SK-N-SH (cell line): ENCODE measurements at regions of chr6 and their contacts with region 1.

Region 1: GRCh38 chr6:30130887-30131862 is 4.8 kb upstream of the TRIM40 start:
- DNase-seq: peak; percentile 83
- H3K4me3 ChIP-seq: peak overlapping the region in 1 of 2 experiments; percentile 18; a peak in 1 of 4 replicates
- H3K27ac ChIP-seq: no peak overlapping the region
- H3K4me1 ChIP-seq: no peaks in the 10 kb centered on the region
- H3K27me3 ChIP-seq: peaks cover 84% of the 10 kb centered on the region
- CTCF ChIP-seq: peak; percentile 99
- EP300 ChIP-seq: no peak
- RAD21 ChIP-seq: peak; percentile 77

Region 2: DNA sequence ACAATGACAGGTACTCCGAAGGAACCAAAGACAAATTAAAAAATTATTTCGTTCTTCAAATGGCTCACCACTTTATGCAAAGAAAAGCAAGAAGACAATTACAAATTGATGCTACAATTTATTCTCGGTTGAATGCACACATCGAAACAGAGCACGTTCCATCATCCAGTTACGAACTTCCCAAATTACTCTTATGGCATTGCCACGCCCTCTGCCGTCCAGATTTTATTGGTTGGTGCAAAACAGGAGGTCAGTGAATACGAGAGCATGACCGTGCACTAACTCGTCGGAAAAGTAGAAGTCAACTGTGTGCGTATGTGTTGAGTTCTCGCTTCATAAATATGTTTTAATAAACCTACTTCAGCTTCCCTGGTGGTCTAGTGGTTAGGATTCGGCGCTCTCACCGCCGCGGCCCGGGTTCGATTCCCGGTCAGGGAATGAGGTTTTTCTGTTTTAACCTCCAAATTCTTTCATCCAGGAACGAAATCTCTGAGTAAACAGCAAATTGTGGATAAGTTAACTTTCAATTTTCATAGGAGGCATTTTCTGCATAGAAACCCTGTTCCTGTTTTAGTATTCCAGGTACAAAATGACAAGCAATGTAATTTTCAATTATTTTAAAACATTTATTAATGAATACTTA is 1149.2 kb before region 1 on chr6:
- CTCF ChIA-PET with region 1: no interaction called
- POLR2A ChIA-PET with region 1: no interaction called
- DNase-seq: peak; percentile 55
- H3K4me3 ChIP-seq: peak overlapping the region; percentile 91 to 100
- H3K27ac ChIP-seq: peak overlapping the region; percentile 66 to 68
- H3K4me1 ChIP-seq: peaks cover 0 to 9% of the 10 kb centered on the region in 2 experiments; a peak in 1 of 4 replicates
- H3K27me3 ChIP-seq: no peaks in the 10 kb centered on the region
- CTCF ChIP-seq: no peak
- EP300 ChIP-seq: 0 out of 4 replicates have a peak, but pooled peaks of 1 of the 2 experiments have one; percentile 31
- RAD21 ChIP-seq: no peak

Region 3: DNA sequence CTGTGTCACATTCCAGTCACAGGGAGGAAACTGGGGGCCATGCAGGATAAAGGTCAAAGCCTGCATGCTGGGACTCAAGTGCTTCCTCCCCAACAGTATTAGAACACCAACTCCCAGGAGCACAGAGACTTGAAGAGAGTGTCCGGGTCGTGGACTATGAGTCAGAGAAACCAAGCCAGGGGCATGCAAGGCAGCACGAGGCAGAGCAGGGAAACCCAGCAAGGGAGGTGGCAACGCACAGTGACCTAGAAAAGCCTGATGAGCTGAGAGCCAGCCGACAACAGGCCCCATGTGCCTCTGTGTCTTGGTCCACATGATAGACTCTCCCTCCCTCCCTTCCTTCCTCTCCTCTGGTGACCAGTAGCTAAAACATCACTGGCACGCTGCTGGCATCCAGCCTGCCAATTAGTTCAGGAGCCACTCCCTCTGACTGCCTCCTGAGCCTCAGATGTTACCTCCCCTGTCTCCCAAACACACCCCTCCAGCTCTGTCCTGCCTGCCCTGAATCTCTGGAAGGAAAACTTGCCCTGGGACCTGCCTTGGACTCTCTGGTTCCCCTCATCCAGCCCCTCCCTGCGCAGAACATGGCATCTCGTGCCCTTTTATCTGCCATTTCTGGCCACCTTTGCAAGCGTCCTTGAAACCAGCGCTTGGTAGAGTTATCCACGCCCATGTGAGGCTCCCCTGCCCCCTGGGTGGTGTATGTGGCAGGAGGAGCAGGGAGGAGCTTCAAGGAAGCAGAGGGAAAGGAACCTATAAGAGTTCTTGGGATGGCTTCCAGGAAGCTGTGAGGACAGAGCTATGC is 39.4 kb before region 1 on chr6:
- CTCF ChIA-PET with region 1: interaction called, 22 read pairs
- POLR2A ChIA-PET with region 1: no interaction called
- DNase-seq: no peak
- H3K4me3 ChIP-seq: no peak overlapping the region
- H3K27ac ChIP-seq: no peak overlapping the region
- H3K4me1 ChIP-seq: no peaks in the 10 kb centered on the region
- H3K27me3 ChIP-seq: peaks cover 56% of the 10 kb centered on the region
- CTCF ChIP-seq: no peak
- EP300 ChIP-seq: no peak
- RAD21 ChIP-seq: no peak

Region 4: DNA sequence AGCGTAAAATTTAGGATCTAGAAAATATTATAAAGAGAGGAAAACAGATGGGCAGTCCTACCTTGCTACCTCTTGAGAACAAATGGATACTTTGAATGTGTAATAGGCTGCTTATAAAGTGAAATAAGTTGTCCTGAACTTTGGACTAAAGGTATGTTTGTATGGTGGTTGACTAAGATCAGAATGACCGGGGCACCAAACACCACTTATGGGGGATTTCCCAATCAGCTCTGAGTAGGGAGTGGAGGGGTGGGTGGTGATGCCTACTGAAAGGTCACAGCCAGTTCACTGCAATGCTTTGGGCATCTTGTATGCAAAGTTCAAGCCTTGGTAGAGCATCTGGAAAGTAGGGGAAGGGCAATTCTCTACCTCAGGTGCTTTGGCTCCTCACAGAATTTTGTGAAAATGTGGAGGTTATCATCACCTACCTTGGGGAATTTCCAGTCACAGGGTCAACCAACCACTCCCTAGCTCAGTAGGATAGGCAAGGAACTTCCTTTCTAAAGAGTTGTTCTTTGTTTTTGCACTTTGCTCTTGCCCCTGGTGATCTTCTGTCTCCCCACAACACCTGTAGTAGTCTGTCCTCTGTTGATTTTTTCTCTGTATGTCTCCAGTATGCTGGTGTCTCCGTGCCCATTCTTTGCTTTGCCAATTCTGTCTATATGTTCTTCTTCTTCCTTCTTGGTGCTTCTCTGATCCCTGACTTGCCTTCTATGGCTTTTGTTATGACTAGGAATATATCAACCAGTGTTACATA is 18.0 kb before region 1 on chr6 and contains the start of gene TRIM31:
- CTCF ChIA-PET with region 1: interaction called, 207 read pairs
- POLR2A ChIA-PET with region 1: no interaction called
- DNase-seq: no peak
- H3K4me3 ChIP-seq: no peak within 1 kb of the TSS
- H3K27ac ChIP-seq: no peak within 1 kb of the TSS
- H3K4me1 ChIP-seq: no peaks in the 10 kb centered on the region
- H3K27me3 ChIP-seq: peaks cover 59% of the 10 kb centered on the region
- CTCF ChIP-seq: no peak
- EP300 ChIP-seq: no peak
- RAD21 ChIP-seq: no peak
- polyA plus RNA-seq, gene TRIM31: not detected in 2 replicates

Region 5: DNA sequence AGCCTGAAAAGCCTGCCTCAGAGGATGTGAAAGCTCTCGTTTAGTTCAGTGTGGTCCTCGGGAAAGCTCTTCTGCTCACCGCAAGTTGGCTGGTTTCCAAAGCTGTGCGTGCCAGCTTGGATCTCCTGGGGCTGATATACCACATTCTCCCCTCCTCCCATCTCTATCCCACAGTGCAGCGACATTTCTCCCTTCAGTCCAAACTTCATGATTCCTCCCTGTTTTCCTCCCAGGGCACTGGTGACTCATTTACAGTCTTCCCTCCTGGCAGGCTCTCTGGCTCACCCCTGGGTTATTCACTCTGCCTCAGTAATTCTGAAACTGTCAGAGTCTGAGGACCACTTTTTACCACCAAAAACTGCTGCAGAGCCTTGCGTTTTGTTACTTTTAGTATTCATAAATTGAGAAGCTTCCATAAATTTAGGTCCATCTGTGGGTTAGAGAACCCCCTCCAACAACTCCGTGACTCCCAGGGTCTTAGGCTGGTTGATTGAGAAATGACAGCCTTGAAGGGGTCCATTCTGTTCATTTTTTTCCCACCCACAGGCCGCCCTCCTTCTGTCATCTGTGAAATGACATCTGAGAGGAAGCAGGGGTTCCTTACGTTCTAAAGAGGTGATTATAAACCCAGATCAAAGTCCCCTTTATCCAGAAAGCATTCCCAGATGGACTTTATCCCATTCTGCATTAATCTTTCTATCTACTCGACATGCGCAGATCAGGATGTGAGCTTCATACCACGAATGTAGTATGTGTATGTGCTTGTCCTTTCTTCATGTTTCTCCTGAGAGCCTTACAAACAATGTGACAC is 23.7 kb after region 1 on chr6:
- CTCF ChIA-PET with region 1: interaction called, 38 read pairs
- POLR2A ChIA-PET with region 1: no interaction called
- DNase-seq: no peak
- H3K4me3 ChIP-seq: no peak overlapping the region
- H3K27ac ChIP-seq: no peak overlapping the region
- H3K4me1 ChIP-seq: no peaks in the 10 kb centered on the region; a peak in 1 of 4 replicates
- H3K27me3 ChIP-seq: peaks cover 28% of the 10 kb centered on the region; the same call in 1 of the 2 replicates
- CTCF ChIP-seq: no peak
- EP300 ChIP-seq: no peak
- RAD21 ChIP-seq: no peak

Region 6: GRCh38 chr6:30188541-30188940 is 57.4 kb after region 1 on chr6:
- CTCF ChIA-PET with region 1: no interaction called
- POLR2A ChIA-PET with region 1: no interaction called
- DNase-seq: no peak
- H3K4me3 ChIP-seq: no peak overlapping the region
- H3K27ac ChIP-seq: no peak overlapping the region
- H3K4me1 ChIP-seq: no peaks in the 10 kb centered on the region
- H3K27me3 ChIP-seq: no peaks in the 10 kb centered on the region
- CTCF ChIP-seq: no peak
- EP300 ChIP-seq: no peak
- RAD21 ChIP-seq: no peak